HEK293 (cell line): ENCODE measurements at regions of chr1 and their contacts with region 1.

Region 1: GRCh38 chr1:182069028-182069466 is 7.5 kb upstream of the ZNF648 start:
- H3K4me3 ChIP-seq: no peak overlapping the region
- H3K27ac ChIP-seq: no peak overlapping the region
- H3K4me1 ChIP-seq: no peaks in the 10 kb centered on the region
- CTCF ChIP-seq: peak; percentile 38; the same call in 1 of the 2 replicates

Region 2: DNA sequence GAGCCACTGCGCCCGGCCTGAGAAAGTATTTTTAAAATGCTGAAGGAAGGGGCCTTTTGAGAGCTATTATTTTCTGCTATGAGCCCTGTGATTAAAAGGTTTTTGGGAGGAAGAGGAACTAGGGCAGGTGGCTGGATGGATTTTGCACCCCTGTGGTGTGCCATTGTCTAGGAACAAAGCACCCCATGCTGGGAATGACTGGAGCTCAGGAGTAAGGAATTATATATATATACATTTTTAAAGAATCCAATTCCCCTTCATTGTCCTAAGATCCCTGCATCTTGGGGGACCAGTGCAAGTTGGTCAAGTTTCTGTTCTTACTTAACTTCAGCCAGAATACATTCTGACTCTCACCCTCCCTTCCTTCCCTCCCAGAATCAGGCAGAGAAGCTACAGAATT is 99.1 kb before region 1 on chr1:
- CTCF ChIA-PET with region 1: no interaction called
- POLR2A ChIA-PET with region 1: no interaction called
- H3K4me3 ChIP-seq: no peak overlapping the region
- H3K27ac ChIP-seq: no peak overlapping the region
- H3K4me1 ChIP-seq: no peaks in the 10 kb centered on the region
- CTCF ChIP-seq: no peak

Region 3: GRCh38 chr1:182015360-182015759 is 53.7 kb before region 1 on chr1:
- CTCF ChIA-PET with region 1: no interaction called
- POLR2A ChIA-PET with region 1: no interaction called
- H3K4me3 ChIP-seq: no peak overlapping the region
- H3K27ac ChIP-seq: no peak overlapping the region
- H3K4me1 ChIP-seq: no peaks in the 10 kb centered on the region
- CTCF ChIP-seq: no peak

Region 4: GRCh38 chr1:182054698-182055326 is 14.2 kb before region 1 on chr1:
- CTCF ChIA-PET with region 1: interaction called, 12 read pairs
- POLR2A ChIA-PET with region 1: no interaction called
- H3K4me3 ChIP-seq: no peak overlapping the region
- H3K27ac ChIP-seq: no peak overlapping the region
- H3K4me1 ChIP-seq: no peaks in the 10 kb centered on the region
- CTCF ChIP-seq: no peak

Region 5: DNA sequence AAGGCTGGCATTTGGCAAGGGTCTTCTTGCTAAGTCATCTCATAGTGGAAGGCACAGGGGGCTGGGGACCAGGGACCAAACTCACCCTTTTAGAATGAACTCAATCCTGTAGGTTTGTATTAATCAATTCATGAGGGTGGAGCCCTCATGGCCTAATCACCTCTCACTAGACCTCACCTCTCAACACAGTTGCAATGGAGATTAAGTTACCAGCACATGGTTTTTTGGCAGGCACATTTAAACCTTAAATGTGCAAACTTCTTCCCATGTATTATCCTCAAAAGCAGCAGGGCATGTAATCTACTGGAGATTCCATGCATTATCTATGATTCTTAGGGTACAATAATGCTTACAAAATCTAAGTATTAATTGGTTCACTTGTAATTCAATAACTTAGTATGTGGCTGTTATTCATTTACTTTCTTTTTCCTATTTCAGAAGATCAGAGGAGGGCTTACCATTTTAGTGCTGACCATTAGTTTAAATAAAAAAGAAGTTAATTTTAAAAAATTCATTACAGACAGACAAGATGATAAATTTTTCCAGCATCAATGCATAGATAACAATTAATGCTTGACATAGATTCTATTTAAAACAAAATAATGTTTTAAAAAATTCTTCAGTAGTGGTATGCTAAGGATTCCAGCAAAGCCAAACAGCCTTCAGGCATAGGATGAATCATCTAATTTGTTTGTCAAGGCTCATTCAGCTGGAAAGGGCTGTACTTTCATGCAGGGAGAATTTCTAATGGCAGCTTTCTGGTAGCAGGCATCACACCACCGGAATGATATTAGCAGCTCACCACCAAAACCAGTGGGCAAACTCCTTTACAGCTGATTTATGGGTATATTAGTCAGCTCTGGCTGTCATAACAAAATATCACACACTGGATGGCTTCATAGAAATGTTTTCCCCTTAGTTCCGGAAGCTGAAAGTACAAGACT is 117.0 kb after region 1 on chr1:
- CTCF ChIA-PET with region 1: no interaction called
- POLR2A ChIA-PET with region 1: no interaction called
- H3K4me3 ChIP-seq: peak overlapping the region; percentile 9; the same call in 1 of the 2 replicates
- H3K27ac ChIP-seq: no peak overlapping the region
- H3K4me1 ChIP-seq: peaks cover 16% of the 10 kb centered on the region
- CTCF ChIP-seq: no peak

Region 6: DNA sequence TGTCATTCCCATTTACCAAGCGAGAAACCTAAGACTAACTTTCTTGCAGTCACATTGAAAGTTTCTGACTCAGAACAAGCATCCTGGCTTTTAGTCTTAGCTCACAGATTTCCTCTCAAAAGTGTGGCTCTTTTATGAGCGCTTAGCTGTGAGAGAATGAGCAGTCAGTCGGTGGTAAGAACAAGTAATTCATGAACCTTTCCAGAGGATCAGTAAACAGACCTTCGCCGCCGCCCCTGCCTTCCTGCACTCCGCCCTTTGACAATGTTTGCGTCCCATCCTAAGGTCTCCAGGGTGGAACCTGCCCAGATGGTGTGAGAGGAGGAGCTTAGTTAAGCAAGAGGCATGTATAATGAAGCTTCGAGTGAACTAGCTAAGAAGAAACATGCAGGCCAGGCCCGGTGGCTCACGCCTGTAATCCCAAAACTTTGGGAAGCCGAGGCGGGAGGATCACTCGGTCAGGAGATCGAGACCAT is 180.2 kb after region 1 on chr1:
- CTCF ChIA-PET with region 1: no interaction called
- POLR2A ChIA-PET with region 1: no interaction called
- H3K4me3 ChIP-seq: no peak overlapping the region
- H3K27ac ChIP-seq: no peak overlapping the region
- H3K4me1 ChIP-seq: no peaks in the 10 kb centered on the region
- CTCF ChIP-seq: no peak